ENCODE measurements at regions of chr12 and their contacts with region 1.

Region 1: DNA sequence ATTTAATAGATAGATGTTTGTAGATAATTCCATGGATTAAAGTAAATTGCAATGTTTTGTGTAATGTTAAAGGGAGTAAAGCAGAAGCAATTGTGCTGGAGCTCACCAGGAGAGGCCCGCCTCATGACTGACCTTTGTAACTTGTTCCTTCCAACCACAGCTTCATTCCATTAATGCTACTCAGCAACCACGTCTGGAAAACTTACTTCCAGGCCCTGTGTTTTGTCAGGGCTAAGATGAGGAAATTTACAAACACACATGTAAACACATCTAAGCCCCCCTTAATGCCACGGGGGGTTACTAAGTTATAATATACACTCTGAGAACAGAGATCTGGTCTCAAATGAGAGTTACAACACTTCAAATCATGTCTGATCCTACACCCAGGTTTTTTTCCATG is 12.4 kb downstream of the LUM start:
- DNase-seq: no peak
- ATAC-seq: peak in 3 of 4 donors; percentile 47 to 87 (median 73)
- H3K4me3 ChIP-seq: no peak overlapping the region
- H3K27ac ChIP-seq: peak overlapping the region in 2 of 12 donors; percentile 18 to 45
- H3K4me1 ChIP-seq: peaks cover 0 to 3% (median 0%) of the 10 kb centered on the region in 12 donors
- H3K27me3 ChIP-seq: no peaks in the 10 kb centered on the region
- CTCF ChIP-seq: no peak
- POLR2A ChIP-seq: no peak

Region 2: DNA sequence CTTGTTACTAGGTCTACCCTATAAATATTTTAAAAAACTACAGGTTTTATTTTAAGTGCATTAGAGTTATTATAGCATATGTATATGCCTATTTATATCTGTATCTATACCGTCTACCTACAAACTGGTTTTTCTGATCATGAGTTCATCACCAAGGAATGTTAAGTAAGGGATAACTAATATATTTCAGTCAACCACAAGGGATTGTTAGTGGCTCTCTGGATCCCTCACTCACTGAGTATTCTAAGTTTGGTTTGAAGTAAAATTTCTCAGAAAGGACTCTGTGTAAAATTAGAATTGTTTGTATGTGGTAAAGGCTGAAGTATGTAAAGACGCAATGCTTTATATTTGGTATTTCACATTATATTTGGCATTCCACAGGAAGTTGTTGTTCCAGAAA is 99.0 kb before region 1 on chr12:
- intact Hi-C with region 1: loop called in 1 of 10 experiments (anchors 10 kb)
- DNase-seq: no peak
- ATAC-seq: no peak
- H3K4me3 ChIP-seq: no peak overlapping the region
- H3K27ac ChIP-seq: no peak overlapping the region
- H3K4me1 ChIP-seq: peaks cover 0 to 4% (median 0%) of the 10 kb centered on the region in 12 donors
- H3K27me3 ChIP-seq: no peaks in the 10 kb centered on the region
- CTCF ChIP-seq: no peak
- POLR2A ChIP-seq: no peak